CD4-positive, alpha-beta T cell (primary cell): ENCODE measurements at regions of chr5 and their contacts with region 1.

Region 1: GRCh38 chr5:173065155-173065554 is 9.0 kb downstream of the CREBRF start:
- DNase-seq: peak in 2 of 14 experiments; percentile 17 to 32
- ATAC-seq: peak; percentile 70
- H3K4me3 ChIP-seq: no peak overlapping the region
- H3K4me3 Mint-ChIP-seq: peak overlapping the region; percentile 40
- H3K27ac ChIP-seq: peak overlapping the region in 1 of 2 donors; percentile 2
- H3K27ac Mint-ChIP-seq: peak overlapping the region; percentile 70
- H3K4me1 ChIP-seq: peaks cover 44% of the 10 kb centered on the region
- H3K4me1 Mint-ChIP-seq: peaks cover 85% of the 10 kb centered on the region
- H3K27me3 ChIP-seq: no peaks in the 10 kb centered on the region
- H3K27me3 Mint-ChIP-seq: no peaks in the 10 kb centered on the region
- CTCF ChIP-seq: no peak

Region 2: DNA sequence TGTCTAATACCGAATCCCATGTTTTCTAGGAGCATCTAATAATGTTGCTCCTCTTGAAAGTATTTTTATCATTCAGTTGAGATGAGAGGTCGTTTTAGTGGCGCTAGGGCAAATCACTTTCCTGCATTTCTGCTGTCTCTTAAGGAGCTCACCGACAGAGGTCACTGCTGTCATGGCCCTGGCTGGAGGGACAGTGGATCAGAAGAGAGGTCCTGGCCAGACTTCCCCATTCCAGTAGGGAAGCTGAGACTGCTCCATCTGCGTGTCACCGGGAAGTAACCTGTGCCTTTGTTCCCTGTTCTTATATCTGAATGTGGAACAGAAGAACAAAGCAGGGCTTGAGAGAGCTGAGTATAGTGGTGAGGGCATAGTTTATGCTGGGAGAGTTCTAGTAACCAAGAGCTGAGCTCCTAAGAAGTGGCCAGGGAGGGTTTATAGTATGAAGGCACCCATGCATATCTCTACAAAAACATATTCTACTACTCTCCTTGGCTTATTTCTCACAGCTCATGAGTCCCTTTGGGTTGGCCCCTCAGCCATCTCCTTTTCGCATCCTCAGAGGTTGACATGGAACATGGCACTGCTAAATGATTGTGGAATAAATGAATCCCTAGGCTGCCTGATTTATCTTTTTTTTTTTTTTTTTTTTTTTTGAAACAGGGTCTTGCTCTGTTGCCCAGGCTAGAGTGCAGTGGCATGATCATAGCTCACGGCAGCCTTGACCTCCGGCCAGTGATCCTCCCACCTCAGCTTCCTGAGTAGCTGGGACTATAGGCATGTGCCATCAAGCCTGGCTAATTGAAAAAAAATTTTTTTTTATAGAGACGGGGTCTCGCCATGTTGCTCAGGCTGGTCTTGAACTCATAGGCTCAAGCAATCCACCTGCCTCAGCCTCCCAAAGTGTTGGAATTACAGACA is 54.3 kb before region 1 on chr5:
- CTCF ChIA-PET with region 1: no interaction called
- POLR2A ChIA-PET with region 1: no interaction called
- intact Hi-C with region 1: no loop called
- DNase-seq: peak in 2 of 14 experiments; percentile 40
- ATAC-seq: no peak
- H3K4me3 ChIP-seq: no peak overlapping the region
- H3K4me3 Mint-ChIP-seq: no peak overlapping the region
- H3K27ac ChIP-seq: no peak overlapping the region
- H3K27ac Mint-ChIP-seq: peak overlapping the region; percentile 42
- H3K4me1 ChIP-seq: peaks cover 16% of the 10 kb centered on the region
- H3K4me1 Mint-ChIP-seq: peaks cover 57% of the 10 kb centered on the region
- H3K27me3 ChIP-seq: no peaks in the 10 kb centered on the region
- H3K27me3 Mint-ChIP-seq: no peaks in the 10 kb centered on the region
- CTCF ChIP-seq: no peak

Region 3: DNA sequence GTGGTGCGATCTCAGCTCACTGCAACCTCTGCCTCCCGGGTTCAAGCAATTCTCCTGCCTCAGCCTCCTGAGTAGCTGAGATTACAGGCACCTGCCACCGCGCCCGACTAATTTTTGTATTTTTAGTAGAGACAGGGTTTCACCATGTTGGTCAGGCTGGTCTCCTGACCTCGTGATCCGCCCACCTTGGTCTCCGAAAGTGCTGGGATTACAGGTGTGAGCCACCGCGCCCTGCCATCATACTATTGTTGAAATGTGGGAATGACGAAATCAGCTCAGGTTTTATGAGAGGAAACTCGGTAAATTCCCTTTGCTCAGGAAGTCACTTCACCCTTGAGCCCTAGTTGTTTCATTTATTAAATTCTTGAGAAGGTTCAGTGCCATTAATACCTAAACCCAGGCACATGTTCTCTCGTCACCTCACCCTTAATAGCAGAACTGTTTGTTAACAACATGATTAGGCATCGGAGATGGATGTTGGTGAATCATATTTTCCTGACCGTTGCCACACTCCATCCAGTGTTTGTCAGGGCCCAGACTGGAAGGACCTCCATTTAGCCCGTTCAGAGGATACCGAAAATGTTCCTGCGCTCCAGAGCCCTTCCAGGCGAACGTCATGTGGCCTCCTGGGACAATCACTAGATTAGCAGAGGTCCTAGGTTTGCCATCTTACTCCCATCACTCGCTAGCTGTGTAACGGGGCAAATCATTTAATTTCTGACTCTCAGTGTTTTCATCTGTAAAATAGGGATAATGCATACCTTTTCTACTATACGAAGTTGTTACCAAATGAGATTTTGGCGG is 29.0 kb before region 1 on chr5:
- CTCF ChIA-PET with region 1: no interaction called
- POLR2A ChIA-PET with region 1: interaction called, 4 read pairs
- intact Hi-C with region 1: loop called in 1 of 2 experiments (anchors 1 kb)
- DNase-seq: peak in 3 of 14 experiments; percentile 27 to 48 (median 36)
- ATAC-seq: no peak
- H3K4me3 ChIP-seq: peak overlapping the region; percentile 45
- H3K4me3 Mint-ChIP-seq: peak overlapping the region; percentile 86
- H3K27ac ChIP-seq: peak overlapping the region; percentile 78 to 80
- H3K27ac Mint-ChIP-seq: peak overlapping the region; percentile 93
- H3K4me1 ChIP-seq: peaks cover 35% of the 10 kb centered on the region
- H3K4me1 Mint-ChIP-seq: peaks cover 66% of the 10 kb centered on the region
- H3K27me3 ChIP-seq: no peaks in the 10 kb centered on the region
- H3K27me3 Mint-ChIP-seq: no peaks in the 10 kb centered on the region
- CTCF ChIP-seq: no peak